PC-9 (cell line): ENCODE measurements at regions of chr4 and their contacts with region 1.

Region 1: DNA sequence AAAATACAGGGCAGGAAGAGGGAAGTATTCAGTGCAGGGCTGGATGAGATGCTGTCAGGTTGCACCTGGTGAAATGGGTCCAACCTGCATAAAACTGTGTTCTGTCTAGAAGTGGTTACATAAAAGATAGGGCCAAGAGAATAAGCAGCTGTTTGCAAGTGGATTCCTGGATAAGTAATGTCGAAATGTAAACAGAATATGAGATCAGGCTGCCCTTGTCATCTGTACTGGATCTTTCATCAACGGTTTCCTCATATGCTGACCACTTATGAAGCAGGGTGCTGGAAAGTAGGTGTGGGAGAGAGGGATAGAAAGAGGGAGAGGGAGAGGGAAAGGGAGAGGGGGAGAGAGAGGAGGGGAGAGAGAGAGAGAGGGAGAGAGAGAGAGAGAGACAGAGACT is 349.8 kb upstream of the CPEB2 start:
- DNase-seq: no peak
- H3K4me3 ChIP-seq: no peak overlapping the region
- H3K27ac ChIP-seq: no peak overlapping the region
- H3K4me1 ChIP-seq: no peaks in the 10 kb centered on the region; the same call in 1 of the 2 replicates
- H3K27me3 ChIP-seq: no peaks in the 10 kb centered on the region
- CTCF ChIP-seq: no peak

Region 2: DNA sequence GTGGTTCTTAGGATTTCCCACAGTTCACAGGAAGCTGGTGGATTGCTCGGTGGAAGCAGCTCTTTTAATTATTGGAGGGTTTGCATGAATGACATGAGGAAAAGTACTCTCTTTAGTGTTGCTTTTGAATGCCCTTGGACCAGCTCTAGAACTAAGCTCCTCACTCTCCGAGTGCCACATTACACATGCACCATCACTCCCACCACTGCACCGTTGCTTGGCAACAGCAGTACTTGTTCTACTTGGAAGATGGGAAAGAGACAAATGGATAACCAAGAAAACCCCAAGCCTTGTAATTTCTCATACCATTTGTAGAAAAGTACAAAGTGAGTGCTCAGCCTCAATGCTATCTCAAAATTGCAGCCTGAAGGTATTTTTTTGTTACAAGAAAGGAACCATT is 404.8 kb before region 1 on chr4:
- CTCF ChIA-PET with region 1: no interaction called
- POLR2A ChIA-PET with region 1: no interaction called
- intact Hi-C with region 1: no loop called
- DNase-seq: no peak
- H3K4me3 ChIP-seq: no peak overlapping the region
- H3K27ac ChIP-seq: no peak overlapping the region
- H3K4me1 ChIP-seq: no peaks in the 10 kb centered on the region
- H3K27me3 ChIP-seq: no peaks in the 10 kb centered on the region
- CTCF ChIP-seq: no peak

Region 3: GRCh38 chr4:14641871-14642270 is 10.7 kb before region 1 on chr4:
- CTCF ChIA-PET with region 1: interaction called, 16 read pairs
- POLR2A ChIA-PET with region 1: no interaction called
- intact Hi-C with region 1: no loop called
- DNase-seq: no peak
- H3K4me3 ChIP-seq: no peak overlapping the region
- H3K27ac ChIP-seq: no peak overlapping the region
- H3K4me1 ChIP-seq: no peaks in the 10 kb centered on the region
- H3K27me3 ChIP-seq: no peaks in the 10 kb centered on the region
- CTCF ChIP-seq: no peak

Region 4: GRCh38 chr4:15778289-15779241 is 1126.0 kb after region 1 on chr4 and contains the start of gene CD38:
- CTCF ChIA-PET with region 1: no interaction called
- POLR2A ChIA-PET with region 1: no interaction called
- intact Hi-C with region 1: no loop called
- DNase-seq: peak in 1 of 2 experiments; percentile 15
- H3K4me3 ChIP-seq: no peak within 1 kb of the TSS
- H3K27ac ChIP-seq: no peak within 1 kb of the TSS
- H3K4me1 ChIP-seq: peaks cover 11% of the 10 kb centered on the region
- H3K27me3 ChIP-seq: no peaks in the 10 kb centered on the region
- CTCF ChIP-seq: no peak
- total RNA-seq, gene CD38: 0.90 and 1.3 TPM in 2 replicates